Ascending aorta (tissue), 2 donors: ENCODE measurements at regions of chr10 and their contacts with region 1.

Region 1: DNA sequence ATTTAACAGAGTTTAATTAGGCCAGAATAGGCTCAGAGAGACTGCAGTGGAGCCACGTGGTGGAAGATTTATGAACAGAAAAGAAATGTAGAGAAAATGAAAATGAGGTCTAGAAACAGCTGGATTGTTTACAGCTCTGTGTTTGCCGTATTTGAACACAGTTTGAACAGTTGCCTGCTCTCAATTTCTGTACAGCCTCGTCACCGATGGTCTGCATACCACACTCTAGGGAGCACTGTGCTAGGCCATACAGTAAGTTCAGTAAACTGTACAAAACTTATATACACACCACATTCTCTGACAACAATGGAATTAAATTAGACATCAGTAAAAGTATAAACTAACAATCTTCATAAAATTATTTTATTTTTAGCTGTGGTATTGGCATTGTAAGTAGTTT is 11.1 kb upstream of the CYP2E1 start:
- DNase-seq: no peak
- H3K4me3 ChIP-seq: no peak overlapping the region
- H3K27ac ChIP-seq: no peak overlapping the region
- H3K4me1 ChIP-seq: no peaks in the 10 kb centered on the region
- H3K27me3 ChIP-seq: no peaks in the 10 kb centered on the region
- CTCF ChIP-seq: no peak

Region 2: DNA sequence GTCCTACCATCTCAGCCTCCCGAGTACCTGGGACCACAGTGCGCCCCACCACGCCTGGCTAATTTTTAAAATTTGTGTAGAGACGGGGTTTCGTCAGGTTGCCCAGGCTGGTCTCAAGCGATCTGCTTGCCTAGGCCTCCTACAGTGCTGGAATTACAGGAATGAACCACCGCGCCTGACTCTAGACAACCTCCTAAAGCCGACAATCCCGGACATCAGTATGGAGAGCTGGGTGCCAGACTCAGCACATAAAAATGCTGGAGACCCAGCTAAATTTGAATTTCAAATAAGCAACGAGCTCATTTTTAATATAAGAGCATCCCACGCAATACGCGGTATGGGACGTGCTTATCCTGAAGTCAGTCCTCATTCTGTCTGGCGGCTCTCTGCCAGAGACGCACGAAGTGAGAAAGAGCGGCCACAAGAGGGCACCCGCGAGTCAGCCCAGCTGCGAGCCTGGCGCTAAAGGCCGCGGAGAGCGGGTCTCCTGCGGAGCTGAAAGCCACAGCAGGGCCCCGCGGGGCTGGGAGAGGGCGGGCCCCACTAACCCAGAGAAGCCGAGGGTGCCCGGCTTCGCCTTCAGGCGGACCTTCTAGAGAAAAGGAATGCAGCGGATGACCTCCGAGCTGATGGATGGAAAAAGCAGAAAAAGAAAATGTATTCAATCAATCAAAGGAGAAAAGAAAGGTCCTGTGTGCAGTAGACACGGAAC is 186.4 kb before region 1 on chr10:
- intact Hi-C with region 1: loop called (anchors 10 kb)
- DNase-seq: peak in 1 of 2 donors; percentile 86
- H3K4me3 ChIP-seq: peak overlapping the region; percentile 34 to 55
- H3K27ac ChIP-seq: no peak overlapping the region
- H3K4me1 ChIP-seq: peaks cover 8 to 11% of the 10 kb centered on the region in 2 donors
- H3K27me3 ChIP-seq: peaks cover 19% of the 10 kb centered on the region
- CTCF ChIP-seq: peak; percentile 73 to 99 (median 97)

Region 3: DNA sequence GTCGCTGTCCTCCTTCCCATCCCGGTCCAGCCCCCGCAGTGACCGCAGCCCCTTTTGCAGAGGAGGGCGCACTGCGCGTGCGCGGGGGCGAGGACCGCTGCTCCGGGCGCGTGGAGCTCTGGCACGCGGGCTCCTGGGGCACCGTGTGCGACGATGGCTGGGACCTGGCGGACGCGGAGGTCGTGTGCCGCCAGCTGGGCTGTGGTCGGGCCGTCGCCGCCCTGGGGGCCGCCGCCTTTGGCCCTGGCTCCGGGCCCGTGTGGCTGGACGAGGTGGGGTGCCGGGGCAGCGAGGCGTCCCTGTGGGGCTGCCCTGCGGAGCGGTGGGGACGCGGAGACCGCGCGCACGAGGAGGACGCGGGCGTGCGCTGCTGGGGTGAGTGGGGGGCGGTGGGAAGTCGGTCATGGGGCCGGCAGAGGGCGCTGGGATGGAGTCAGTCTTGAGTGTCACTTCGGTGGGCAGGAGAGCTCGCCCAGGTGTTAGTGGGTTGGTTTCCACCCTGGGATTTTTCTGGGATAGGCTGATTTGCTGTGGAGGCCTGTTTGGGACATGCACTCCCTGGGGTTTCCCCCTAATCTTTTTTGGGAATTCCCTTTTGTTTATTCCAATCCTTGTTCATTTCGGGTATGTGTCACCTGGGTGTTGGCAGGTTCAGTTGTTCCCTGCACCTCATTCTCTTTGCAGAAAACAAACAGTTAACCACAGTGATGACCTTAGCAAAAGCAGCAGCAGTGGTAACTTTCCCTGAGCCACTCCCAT is 50.7 kb before region 1 on chr10:
- intact Hi-C with region 1: no loop called
- DNase-seq: no peak
- H3K4me3 ChIP-seq: no peak overlapping the region
- H3K27ac ChIP-seq: no peak overlapping the region
- H3K4me1 ChIP-seq: no peaks in the 10 kb centered on the region
- H3K27me3 ChIP-seq: no peaks in the 10 kb centered on the region
- CTCF ChIP-seq: no peak

Region 4: GRCh38 chr10:133592716-133593115 is 76.7 kb after region 1 on chr10:
- intact Hi-C with region 1: no loop called
- DNase-seq: no peak
- H3K4me3 ChIP-seq: no peak overlapping the region
- H3K27ac ChIP-seq: no peak overlapping the region
- H3K4me1 ChIP-seq: no peaks in the 10 kb centered on the region
- H3K27me3 ChIP-seq: no peaks in the 10 kb centered on the region
- CTCF ChIP-seq: no peak